ENCODE measurements at regions of chr6 and their contacts with region 1.

Region 1: GRCh38 chr6:56437171-56437900 is 190.0 kb upstream of the COL21A1 start:
- DNase-seq: no peak
- H3K4me3 Mint-ChIP-seq: no peak overlapping the region
- H3K27ac Mint-ChIP-seq: no peak overlapping the region
- H3K4me1 Mint-ChIP-seq: no peaks in the 10 kb centered on the region
- H3K27me3 Mint-ChIP-seq: peaks cover 3% of the 10 kb centered on the region

Region 2: GRCh38 chr6:56424542-56425083 is 12.7 kb before region 1 on chr6:
- CTCF ChIA-PET with region 1: interaction called, 3 read pairs
- intact Hi-C with region 1: loop called (anchors 1 kb)
- DNase-seq: no peak
- H3K4me3 Mint-ChIP-seq: no peak overlapping the region
- H3K27ac Mint-ChIP-seq: no peak overlapping the region
- H3K4me1 Mint-ChIP-seq: no peaks in the 10 kb centered on the region
- H3K27me3 Mint-ChIP-seq: peaks cover 9% of the 10 kb centered on the region

Region 3: DNA sequence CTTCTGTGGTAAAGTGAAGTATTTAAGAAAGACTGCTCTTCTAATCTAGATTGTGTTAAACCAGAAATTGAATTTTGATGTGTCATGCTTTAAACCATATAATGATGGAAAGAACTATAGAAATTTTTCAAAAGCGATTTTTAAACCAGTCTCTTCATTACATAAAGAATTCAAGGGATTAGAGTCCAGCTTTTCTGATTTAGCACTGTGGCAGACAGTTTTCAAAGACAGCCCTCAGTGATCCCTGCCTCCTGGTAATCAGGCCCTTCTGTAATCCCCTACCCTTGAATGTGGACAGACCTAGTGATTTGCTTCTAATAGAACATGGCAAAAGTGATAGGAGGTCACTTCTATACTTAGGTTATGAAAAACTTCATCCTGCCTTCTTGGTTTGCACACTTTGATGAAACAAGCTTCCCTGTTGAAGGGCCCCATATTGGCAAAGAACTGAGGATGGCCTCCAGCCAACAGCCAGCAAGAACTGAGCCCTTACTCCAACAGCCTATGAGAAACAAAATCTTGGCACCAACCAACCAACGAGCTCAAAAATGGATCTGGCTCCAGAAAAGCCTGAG is 13.9 kb after region 1 on chr6:
- CTCF ChIA-PET with region 1: no interaction called
- intact Hi-C with region 1: no loop called
- DNase-seq: no peak
- H3K4me3 Mint-ChIP-seq: no peak overlapping the region
- H3K27ac Mint-ChIP-seq: no peak overlapping the region
- H3K4me1 Mint-ChIP-seq: peaks cover 1% of the 10 kb centered on the region
- H3K27me3 Mint-ChIP-seq: no peaks in the 10 kb centered on the region

Region 4: GRCh38 chr6:56475736-56476457 is 38.6 kb after region 1 on chr6:
- CTCF ChIA-PET with region 1: no interaction called
- intact Hi-C with region 1: no loop called
- DNase-seq: no peak
- H3K4me3 Mint-ChIP-seq: no peak overlapping the region
- H3K27ac Mint-ChIP-seq: no peak overlapping the region
- H3K4me1 Mint-ChIP-seq: no peaks in the 10 kb centered on the region
- H3K27me3 Mint-ChIP-seq: no peaks in the 10 kb centered on the region

Measured in activated naive CD4-positive, alpha-beta T cell treated with anti-CD3 and anti-CD28 coated beads for 36 hours (primary cell).